ENCODE measurements at regions of chr1 and their contacts with region 1.

Region 1: GRCh38 chr1:41662061-41662764 is 177.7 kb upstream of the EDN2 start:
- DNase-seq: no peak
- ATAC-seq: peak; percentile 74
- H3K4me3 ChIP-seq: peak overlapping the region; percentile 80
- H3K27ac ChIP-seq: peak overlapping the region; percentile 28; the same call in 1 of the 2 replicates
- H3K4me1 ChIP-seq: peaks cover 26% of the 10 kb centered on the region
- H3K27me3 ChIP-seq: no peaks in the 10 kb centered on the region
- CTCF ChIP-seq: no peak
- EP300 ChIP-seq: no peak
- POLR2A ChIP-seq: peak; percentile 35; the same call in 1 of the 2 replicates
- RAD21 ChIP-seq: no peak

Region 2: DNA sequence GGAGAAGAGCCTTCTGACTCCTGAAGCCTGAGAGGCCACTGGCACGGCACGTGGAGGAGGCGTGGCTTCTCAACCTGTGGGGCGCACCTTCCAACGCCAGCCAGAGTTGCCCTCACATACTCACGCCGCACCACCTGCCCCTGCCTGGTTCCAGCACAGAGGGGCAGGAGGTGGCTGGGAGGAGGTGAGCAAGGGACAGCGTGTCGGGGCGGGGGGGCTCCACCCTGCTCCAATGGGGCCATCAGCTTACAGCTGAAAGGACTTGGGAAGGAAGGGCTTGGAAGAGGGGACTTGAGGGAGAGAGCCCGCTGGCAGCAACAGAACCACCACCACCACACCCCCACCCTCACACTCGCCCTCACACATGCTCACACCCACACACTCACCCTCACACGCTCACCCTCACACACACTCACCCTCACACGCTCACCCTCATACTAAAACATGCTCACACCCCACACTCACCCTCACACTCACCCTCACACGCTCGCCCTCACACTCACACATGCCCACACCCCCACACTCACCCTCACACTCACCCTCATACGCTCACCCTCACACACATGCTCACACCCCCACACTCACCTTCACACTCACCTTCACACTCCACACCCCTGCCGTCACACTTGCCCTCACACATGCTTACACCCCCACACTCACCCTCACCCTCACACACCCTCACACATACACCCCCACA is 136.2 kb before region 1 on chr1:
- CTCF ChIA-PET with region 1: no interaction called
- POLR2A ChIA-PET with region 1: no interaction called
- RAD21 ChIA-PET with region 1: no interaction called
- SMC1A ChIA-PET with region 1: no interaction called
- in situ Hi-C with region 1: no loop called
- intact Hi-C with region 1: no loop called
- DNase-seq: no peak
- ATAC-seq: no peak
- H3K4me3 ChIP-seq: no peak overlapping the region
- H3K27ac ChIP-seq: no peak overlapping the region
- H3K4me1 ChIP-seq: no peaks in the 10 kb centered on the region
- H3K27me3 ChIP-seq: no peaks in the 10 kb centered on the region
- CTCF ChIP-seq: no peak
- EP300 ChIP-seq: no peak
- POLR2A ChIP-seq: no peak
- RAD21 ChIP-seq: no peak

Region 3: GRCh38 chr1:41639332-41639936 is 22.8 kb before region 1 on chr1:
- CTCF ChIA-PET with region 1: interaction called, 4 read pairs
- POLR2A ChIA-PET with region 1: interaction called, 3 read pairs
- RAD21 ChIA-PET with region 1: interaction called, 83 read pairs
- SMC1A ChIA-PET with region 1: interaction called, 102 read pairs
- in situ Hi-C with region 1: no loop called
- intact Hi-C with region 1: no loop called
- DNase-seq: no peak
- ATAC-seq: peak; percentile 66
- H3K4me3 ChIP-seq: no peak overlapping the region
- H3K27ac ChIP-seq: peak overlapping the region; percentile 54
- H3K4me1 ChIP-seq: peaks cover 43% of the 10 kb centered on the region
- H3K27me3 ChIP-seq: no peaks in the 10 kb centered on the region
- CTCF ChIP-seq: no peak
- EP300 ChIP-seq: no peak
- POLR2A ChIP-seq: no peak
- RAD21 ChIP-seq: no peak

Region 4: GRCh38 chr1:41683681-41684500 is 21.7 kb after region 1 on chr1:
- CTCF ChIA-PET with region 1: interaction called, 20 read pairs
- POLR2A ChIA-PET with region 1: interaction called, 20 read pairs
- RAD21 ChIA-PET with region 1: interaction called, 16 read pairs
- SMC1A ChIA-PET with region 1: interaction called, 15 read pairs
- in situ Hi-C with region 1: no loop called
- intact Hi-C with region 1: no loop called
- DNase-seq: no peak
- ATAC-seq: no peak; the same call in 1 of the 3 replicates
- H3K4me3 ChIP-seq: no peak overlapping the region
- H3K27ac ChIP-seq: peak overlapping the region; percentile 51
- H3K4me1 ChIP-seq: peaks cover 50% of the 10 kb centered on the region
- H3K27me3 ChIP-seq: no peaks in the 10 kb centered on the region
- CTCF ChIP-seq: no peak
- EP300 ChIP-seq: no peak
- POLR2A ChIP-seq: no peak
- RAD21 ChIP-seq: no peak

Region 5: GRCh38 chr1:41720861-41721410 is 58.7 kb after region 1 on chr1:
- CTCF ChIA-PET with region 1: interaction called, 10 read pairs
- POLR2A ChIA-PET with region 1: interaction called, 6 read pairs
- RAD21 ChIA-PET with region 1: interaction called, 262 read pairs
- SMC1A ChIA-PET with region 1: interaction called, 48 read pairs
- in situ Hi-C with region 1: no loop called
- intact Hi-C with region 1: loop called (anchors 2 kb)
- DNase-seq: no peak
- ATAC-seq: peak; percentile 80
- H3K4me3 ChIP-seq: no peak overlapping the region
- H3K27ac ChIP-seq: peak overlapping the region; percentile 21; the same call in 1 of the 2 replicates
- H3K4me1 ChIP-seq: peaks cover 69% of the 10 kb centered on the region
- H3K27me3 ChIP-seq: no peaks in the 10 kb centered on the region
- CTCF ChIP-seq: no peak
- EP300 ChIP-seq: no peak
- POLR2A ChIP-seq: no peak
- RAD21 ChIP-seq: no peak

Region 6: GRCh38 chr1:41802532-41803501 is 140.6 kb after region 1 on chr1:
- CTCF ChIA-PET with region 1: interaction called, 4 read pairs
- POLR2A ChIA-PET with region 1: interaction called, 3 read pairs
- RAD21 ChIA-PET with region 1: interaction called, 6 read pairs
- SMC1A ChIA-PET with region 1: interaction called, 11 read pairs
- in situ Hi-C with region 1: no loop called
- intact Hi-C with region 1: loop called (anchors 5 kb)
- DNase-seq: peak; percentile 85
- ATAC-seq: peak; percentile 50
- H3K4me3 ChIP-seq: no peak overlapping the region
- H3K27ac ChIP-seq: peak overlapping the region; percentile 74
- H3K4me1 ChIP-seq: peaks cover 86% of the 10 kb centered on the region
- H3K27me3 ChIP-seq: no peaks in the 10 kb centered on the region
- CTCF ChIP-seq: no peak
- EP300 ChIP-seq: peak in 1 of 2 experiments; percentile 44; a peak in 2 of 4 replicates
- POLR2A ChIP-seq: no peak
- RAD21 ChIP-seq: no peak